ENCODE measurements at regions of chr9 and their contacts with region 1.

Region 1: DNA sequence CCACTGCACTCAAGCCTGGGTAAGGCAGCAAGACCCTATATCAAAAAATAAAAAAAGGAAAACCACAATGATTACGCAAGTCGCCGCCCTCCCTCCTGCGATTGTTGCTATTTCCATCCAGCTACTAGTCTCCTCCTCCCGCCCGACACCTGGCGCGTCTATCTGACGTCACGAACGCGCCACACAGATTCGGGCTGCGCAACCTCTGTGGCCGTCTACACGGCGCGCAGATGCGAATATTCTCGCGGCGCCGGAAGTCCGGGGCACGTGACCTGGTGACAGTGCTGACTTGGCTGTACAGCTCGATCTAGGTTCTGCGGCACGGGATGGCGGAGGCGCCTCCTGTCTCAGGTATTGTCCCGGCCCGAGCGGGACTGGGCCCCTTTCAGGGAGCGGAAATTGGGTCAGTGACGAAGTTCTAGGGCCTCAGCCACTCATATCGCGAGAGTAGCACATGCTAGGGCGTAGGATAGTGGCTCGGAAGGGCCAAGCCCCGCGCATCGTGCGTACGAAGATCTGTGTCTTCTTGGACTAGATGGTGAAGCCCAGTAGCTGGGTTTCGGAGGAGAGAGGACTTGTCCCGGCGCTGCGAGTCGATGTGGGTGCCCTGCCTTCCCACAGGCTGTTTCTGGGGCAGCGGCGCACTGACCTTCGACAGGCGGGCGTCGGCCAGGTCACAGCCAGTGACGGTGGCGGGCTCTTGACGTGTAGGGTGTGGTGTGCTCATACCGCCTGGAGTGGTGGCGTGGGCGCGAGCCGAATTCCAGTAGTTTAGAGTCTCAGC is at the start of gene NFX1:
- DNase-seq: peak; percentile 94 to 100 (median 99)
- ATAC-seq: peak; percentile 89
- H3K4me3 ChIP-seq: peak within 1 kb of the TSS; percentile 76
- H3K4me3 Mint-ChIP-seq: peak within 1 kb of the TSS; percentile 83 to 99 (median 94)
- H3K27ac ChIP-seq: peak within 1 kb of the TSS; percentile 93
- H3K27ac Mint-ChIP-seq: peak within 1 kb of the TSS; percentile 96 to 100 (median 99)
- H3K4me1 ChIP-seq: peaks cover 11 to 49% of the 10 kb centered on the region in 2 donors
- H3K4me1 Mint-ChIP-seq: peaks cover 36 to 72% (median 58%) of the 10 kb centered on the region in 7 donors
- H3K27me3 ChIP-seq: no peaks in the 10 kb centered on the region
- H3K27me3 Mint-ChIP-seq: peaks cover 0 to 4% (median 0%) of the 10 kb centered on the region in 5 donors
- total RNA-seq, gene NFX1: 39.8 to 65.4 (median 43.6) TPM

Region 2: GRCh38 chr9:32550562-32551433 is 739.6 kb before region 1 on chr9:
- CTCF ChIA-PET with region 1: no interaction called
- POLR2A ChIA-PET with region 1: no interaction called
- intact Hi-C with region 1: loop called in 1 of 2 experiments (anchors 1 kb)
- DNase-seq: peak; percentile 89 to 99 (median 96)
- ATAC-seq: peak; percentile 90
- H3K4me3 ChIP-seq: peak overlapping the region; percentile 93
- H3K4me3 Mint-ChIP-seq: peak overlapping the region; percentile 92 to 100 (median 99)
- H3K27ac ChIP-seq: peak overlapping the region; percentile 97
- H3K27ac Mint-ChIP-seq: peak overlapping the region; percentile 96 to 100 (median 98)
- H3K4me1 ChIP-seq: peaks cover 13 to 20% of the 10 kb centered on the region in 2 donors
- H3K4me1 Mint-ChIP-seq: peaks cover 31 to 70% (median 56%) of the 10 kb centered on the region in 7 donors
- H3K27me3 ChIP-seq: no peaks in the 10 kb centered on the region
- H3K27me3 Mint-ChIP-seq: no peaks in the 10 kb centered on the region

Region 3: GRCh38 chr9:33167046-33167808 is 123.2 kb before region 1 on chr9 and contains the start of gene B4GALT1:
- CTCF ChIA-PET with region 1: no interaction called
- POLR2A ChIA-PET with region 1: interaction called, 4 read pairs
- intact Hi-C with region 1: loop called in 1 of 2 experiments (anchors 1 kb)
- DNase-seq: peak; percentile 81 to 97 (median 90)
- ATAC-seq: peak; percentile 86
- H3K4me3 ChIP-seq: peak within 1 kb of the TSS; percentile 68
- H3K4me3 Mint-ChIP-seq: peak within 1 kb of the TSS; percentile 87 to 97 (median 95)
- H3K27ac ChIP-seq: peak within 1 kb of the TSS; percentile 91
- H3K27ac Mint-ChIP-seq: peak within 1 kb of the TSS; percentile 91 to 100 (median 99)
- H3K4me1 ChIP-seq: peaks cover 43 to 45% of the 10 kb centered on the region in 2 donors
- H3K4me1 Mint-ChIP-seq: peaks cover 47 to 69% (median 64%) of the 10 kb centered on the region in 7 donors
- H3K27me3 ChIP-seq: no peaks in the 10 kb centered on the region
- H3K27me3 Mint-ChIP-seq: no peaks in the 10 kb centered on the region
- total RNA-seq, gene B4GALT1: 40.7 to 86.2 (median 45.6) TPM

Region 4: DNA sequence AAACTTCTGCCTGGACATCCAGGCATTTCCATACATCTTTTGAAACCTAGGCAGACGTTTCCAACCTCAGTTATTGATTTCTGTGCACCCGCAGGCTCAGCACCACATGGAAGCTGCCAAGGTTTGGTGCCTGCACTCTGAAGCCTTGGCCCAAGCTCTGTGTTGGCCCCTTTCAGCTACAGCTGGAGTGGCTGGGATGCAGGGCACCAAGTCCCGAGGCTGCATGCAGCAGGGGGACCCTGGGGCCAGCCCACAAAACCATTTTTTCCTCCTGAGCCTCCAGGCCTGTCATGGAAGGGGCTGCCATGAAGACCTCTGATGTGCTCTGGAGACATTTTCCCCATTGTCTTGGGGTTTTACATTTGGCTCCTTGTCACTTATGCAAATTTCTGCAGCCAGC is 49.7 kb after region 1 on chr9:
- CTCF ChIA-PET with region 1: no interaction called
- POLR2A ChIA-PET with region 1: interaction called, 3 read pairs
- intact Hi-C with region 1: loop called in 1 of 2 experiments (anchors 5 kb)
- DNase-seq: no peak
- ATAC-seq: no peak
- H3K4me3 ChIP-seq: no peak overlapping the region
- H3K4me3 Mint-ChIP-seq: no peak overlapping the region
- H3K27ac ChIP-seq: no peak overlapping the region
- H3K27ac Mint-ChIP-seq: peak overlapping the region in 2 of 9 donors; percentile 30 to 78
- H3K4me1 ChIP-seq: no peaks in the 10 kb centered on the region
- H3K4me1 Mint-ChIP-seq: peaks cover 0 to 18% (median 0%) of the 10 kb centered on the region in 7 donors
- H3K27me3 ChIP-seq: no peaks in the 10 kb centered on the region
- H3K27me3 Mint-ChIP-seq: no peaks in the 10 kb centered on the region

Region 5: GRCh38 chr9:33466565-33467495 is 176.4 kb after region 1 on chr9:
- CTCF ChIA-PET with region 1: interaction called, 3 read pairs
- POLR2A ChIA-PET with region 1: interaction called, 3 read pairs
- intact Hi-C with region 1: loop called (anchors 1 kb)
- DNase-seq: peak; percentile 42 to 82 (median 67)
- ATAC-seq: peak; percentile 84
- H3K4me3 ChIP-seq: no peak overlapping the region
- H3K4me3 Mint-ChIP-seq: peak overlapping the region in 1 of 10 donors; percentile 31
- H3K27ac ChIP-seq: peak overlapping the region; percentile 18
- H3K27ac Mint-ChIP-seq: peak overlapping the region in 6 of 9 donors; percentile 31 to 76 (median 43)
- H3K4me1 ChIP-seq: no peaks in the 10 kb centered on the region
- H3K4me1 Mint-ChIP-seq: peaks cover 5 to 12% (median 7%) of the 10 kb centered on the region in 7 donors
- H3K27me3 ChIP-seq: no peaks in the 10 kb centered on the region
- H3K27me3 Mint-ChIP-seq: no peaks in the 10 kb centered on the region

Region 6: DNA sequence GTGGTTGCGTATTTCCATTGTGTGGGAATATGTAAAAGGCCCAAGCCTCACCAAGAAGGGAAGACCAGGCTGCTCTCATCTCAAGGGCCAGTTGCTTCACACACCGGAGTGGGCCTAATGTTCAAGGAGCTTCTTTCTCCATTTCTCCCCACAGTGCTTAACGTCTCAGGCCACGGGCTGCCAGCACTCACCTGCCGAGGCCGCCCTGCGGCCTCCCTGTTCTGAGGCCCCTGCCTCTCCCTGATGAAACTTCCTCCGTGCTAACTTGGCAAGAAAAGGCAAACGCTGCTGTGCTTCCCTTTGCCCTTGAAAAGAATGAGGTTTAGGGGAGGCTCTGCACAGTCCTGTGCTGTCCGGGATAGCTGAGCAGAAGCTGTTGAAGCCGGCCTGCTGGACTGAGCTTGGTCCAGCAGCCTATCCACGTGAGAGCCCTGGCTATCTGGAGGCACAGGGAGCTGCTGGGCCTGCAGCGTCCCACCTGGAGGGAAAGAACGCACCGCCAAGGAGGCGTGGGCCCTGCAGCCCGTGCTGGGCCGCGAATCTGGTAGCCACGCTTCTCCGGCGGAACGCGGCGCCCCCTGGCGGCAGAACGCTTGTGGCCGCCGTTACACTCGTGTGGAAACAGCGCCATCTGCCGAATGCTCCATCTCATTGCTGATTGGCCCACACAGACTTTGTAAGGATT is 431.4 kb after region 1 on chr9:
- CTCF ChIA-PET with region 1: no interaction called
- POLR2A ChIA-PET with region 1: no interaction called
- intact Hi-C with region 1: loop called in 1 of 2 experiments (anchors 1 kb)
- DNase-seq: peak; percentile 68 to 90 (median 86)
- ATAC-seq: peak; percentile 93
- H3K4me3 ChIP-seq: no peak overlapping the region
- H3K4me3 Mint-ChIP-seq: peak overlapping the region in 1 of 10 donors; percentile 32
- H3K27ac ChIP-seq: no peak overlapping the region
- H3K27ac Mint-ChIP-seq: peak overlapping the region in 3 of 9 donors; percentile 22 to 55 (median 49)
- H3K4me1 ChIP-seq: no peaks in the 10 kb centered on the region
- H3K4me1 Mint-ChIP-seq: peaks cover 0 to 4% (median 0%) of the 10 kb centered on the region in 7 donors
- H3K27me3 ChIP-seq: no peaks in the 10 kb centered on the region
- H3K27me3 Mint-ChIP-seq: peaks cover 5 to 27% (median 13%) of the 10 kb centered on the region in 5 donors

Region 7: DNA sequence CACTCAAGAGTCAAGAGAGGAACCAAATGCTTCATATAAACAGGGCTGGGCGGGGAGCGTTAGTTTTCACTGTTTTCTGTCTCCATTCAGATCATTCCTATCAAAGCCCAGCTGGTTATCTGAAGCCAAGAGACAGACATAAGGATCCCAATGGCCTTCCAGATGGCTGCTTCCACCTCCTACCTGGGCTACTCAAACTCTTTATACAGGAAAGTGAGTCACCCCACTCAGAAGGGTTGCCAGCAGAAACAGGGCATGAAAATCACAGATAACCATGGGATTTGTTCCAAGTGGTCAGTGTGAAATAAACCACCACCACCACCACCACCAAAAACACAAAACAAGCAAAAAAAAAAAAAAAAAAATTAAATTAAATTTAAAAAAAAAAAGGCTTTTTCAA is 510.4 kb after region 1 on chr9:
- CTCF ChIA-PET with region 1: no interaction called
- POLR2A ChIA-PET with region 1: no interaction called
- intact Hi-C with region 1: no loop called
- DNase-seq: no peak
- ATAC-seq: no peak
- H3K4me3 ChIP-seq: no peak overlapping the region
- H3K4me3 Mint-ChIP-seq: no peak overlapping the region
- H3K27ac ChIP-seq: no peak overlapping the region
- H3K27ac Mint-ChIP-seq: no peak overlapping the region
- H3K4me1 ChIP-seq: no peaks in the 10 kb centered on the region
- H3K4me1 Mint-ChIP-seq: no peaks in the 10 kb centered on the region
- H3K27me3 ChIP-seq: no peaks in the 10 kb centered on the region
- H3K27me3 Mint-ChIP-seq: peaks cover 8 to 23% (median 15%) of the 10 kb centered on the region in 5 donors

Measured in naive thymus-derived CD4-positive, alpha-beta T cell (primary cell).